CD8-positive, alpha-beta T cell (primary cell): ENCODE measurements at regions of chr5 and their contacts with region 1.

Region 1: DNA sequence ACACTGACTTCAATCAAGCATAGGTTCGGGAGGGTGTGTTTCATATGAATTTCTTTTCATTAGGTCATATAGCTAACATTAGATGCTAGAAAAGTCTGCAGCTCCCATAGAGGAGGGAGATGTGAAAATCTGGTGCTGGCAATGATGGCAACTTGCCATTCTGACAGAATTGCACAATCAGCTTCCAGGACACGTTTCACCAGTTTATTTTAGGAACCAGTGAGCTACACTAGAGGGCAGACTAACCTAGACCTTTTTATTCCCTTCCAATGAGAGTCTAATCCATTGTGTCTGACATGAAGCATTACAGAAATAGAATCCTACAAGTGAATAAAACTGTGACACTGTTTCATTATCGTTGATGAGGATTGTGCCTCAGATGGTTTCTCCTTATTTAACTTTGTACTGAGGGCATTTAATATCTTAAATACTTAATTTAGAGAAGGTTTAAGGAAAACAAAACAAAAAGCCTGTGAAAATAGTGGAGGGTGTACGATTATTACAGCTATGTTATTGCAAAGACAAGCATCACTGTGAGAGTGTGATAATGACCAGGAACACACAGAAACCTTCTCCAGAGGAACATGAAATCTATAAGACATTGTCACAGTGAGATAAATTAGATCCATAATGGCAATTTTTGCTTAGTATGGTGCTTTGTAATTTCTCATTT is 363.3 kb upstream of the RPS23 start:
- DNase-seq: peak in 2 of 9 experiments; percentile 22 to 45
- ATAC-seq: no peak
- H3K4me3 ChIP-seq: no peak overlapping the region
- H3K4me3 Mint-ChIP-seq: no peak overlapping the region
- H3K27ac ChIP-seq: no peak overlapping the region
- H3K27ac Mint-ChIP-seq: no peak overlapping the region
- H3K4me1 ChIP-seq: no peaks in the 10 kb centered on the region
- H3K4me1 Mint-ChIP-seq: no peaks in the 10 kb centered on the region
- H3K27me3 ChIP-seq: no peaks in the 10 kb centered on the region
- H3K27me3 Mint-ChIP-seq: no peaks in the 10 kb centered on the region
- CTCF ChIP-seq: no peak

Region 2: GRCh38 chr5:82793808-82794419 is 152.4 kb after region 1 on chr5:
- CTCF ChIA-PET with region 1: no interaction called
- POLR2A ChIA-PET with region 1: no interaction called
- intact Hi-C with region 1: loop called in 1 of 2 experiments (anchors 10 kb)
- DNase-seq: peak in 7 of 9 experiments; percentile 9 to 51 (median 30)
- ATAC-seq: no peak
- H3K4me3 ChIP-seq: no peak overlapping the region
- H3K4me3 Mint-ChIP-seq: no peak overlapping the region
- H3K27ac ChIP-seq: no peak overlapping the region
- H3K27ac Mint-ChIP-seq: no peak overlapping the region
- H3K4me1 ChIP-seq: no peaks in the 10 kb centered on the region
- H3K4me1 Mint-ChIP-seq: no peaks in the 10 kb centered on the region
- H3K27me3 ChIP-seq: no peaks in the 10 kb centered on the region
- H3K27me3 Mint-ChIP-seq: peaks cover 8% of the 10 kb centered on the region
- CTCF ChIP-seq: peak; percentile 82

Region 3: DNA sequence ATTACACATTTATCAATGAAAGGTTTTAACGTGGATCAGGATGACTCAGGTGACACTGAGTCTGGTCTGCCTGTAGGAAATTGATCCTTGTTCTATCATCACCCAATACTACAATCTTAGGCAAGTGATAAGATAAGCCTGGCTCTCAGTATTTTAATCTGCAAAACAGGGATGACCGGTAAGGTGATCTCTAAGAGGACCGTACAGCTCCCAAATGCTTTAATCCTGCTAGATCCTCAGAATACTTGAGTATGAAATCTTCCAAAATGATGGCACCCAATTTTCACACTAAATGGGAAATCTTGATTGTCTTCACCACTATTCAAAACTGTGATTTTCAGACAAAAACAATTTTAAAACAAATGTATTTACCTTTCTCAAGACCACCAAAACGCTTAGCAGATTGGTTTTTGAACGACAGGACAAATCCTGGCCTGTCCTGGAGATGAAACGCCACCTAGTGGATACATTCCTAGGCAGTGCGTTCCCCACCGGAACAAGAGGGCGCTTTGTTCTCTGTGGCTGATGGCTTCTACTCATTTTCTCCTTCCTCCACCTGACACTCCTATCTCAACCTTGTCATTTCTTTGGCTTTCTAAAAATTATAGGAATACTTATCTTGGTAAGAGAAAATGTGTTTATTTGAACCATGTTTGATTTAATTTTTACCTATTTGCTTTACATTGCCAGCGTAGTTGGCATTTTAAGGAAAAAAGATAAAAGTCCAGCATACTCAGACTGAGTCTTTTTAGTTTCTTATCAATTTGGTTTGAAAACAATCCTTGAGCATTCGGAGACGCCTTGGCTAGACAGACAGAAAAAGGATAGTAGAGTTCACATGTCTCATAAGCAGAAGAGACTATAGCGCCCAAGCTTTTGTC is 788.9 kb after region 1 on chr5:
- CTCF ChIA-PET with region 1: no interaction called
- POLR2A ChIA-PET with region 1: no interaction called
- intact Hi-C with region 1: loop called in 1 of 2 experiments (anchors 2 kb)
- DNase-seq: peak; percentile 1 to 64 (median 34)
- ATAC-seq: no peak
- H3K4me3 ChIP-seq: no peak overlapping the region
- H3K4me3 Mint-ChIP-seq: no peak overlapping the region
- H3K27ac ChIP-seq: no peak overlapping the region
- H3K27ac Mint-ChIP-seq: no peak overlapping the region
- H3K4me1 ChIP-seq: no peaks in the 10 kb centered on the region
- H3K4me1 Mint-ChIP-seq: no peaks in the 10 kb centered on the region
- H3K27me3 ChIP-seq: no peaks in the 10 kb centered on the region
- H3K27me3 Mint-ChIP-seq: no peaks in the 10 kb centered on the region
- CTCF ChIP-seq: peak; percentile 65

Region 4: GRCh38 chr5:83564069-83564749 is 922.7 kb after region 1 on chr5:
- CTCF ChIA-PET with region 1: interaction called, 4 read pairs
- POLR2A ChIA-PET with region 1: no interaction called
- intact Hi-C with region 1: loop called (anchors 2 to 5 kb)
- DNase-seq: peak in 2 of 9 experiments; percentile 30 to 50
- ATAC-seq: no peak
- H3K4me3 ChIP-seq: no peak overlapping the region
- H3K4me3 Mint-ChIP-seq: no peak overlapping the region
- H3K27ac ChIP-seq: no peak overlapping the region
- H3K27ac Mint-ChIP-seq: no peak overlapping the region
- H3K4me1 ChIP-seq: no peaks in the 10 kb centered on the region
- H3K4me1 Mint-ChIP-seq: no peaks in the 10 kb centered on the region
- H3K27me3 ChIP-seq: peaks cover 0 to 2% of the 10 kb centered on the region in 2 experiments
- H3K27me3 Mint-ChIP-seq: no peaks in the 10 kb centered on the region
- CTCF ChIP-seq: peak; percentile 76